ENCODE measurements at regions of chr14 and their contacts with region 1.

Region 1: DNA sequence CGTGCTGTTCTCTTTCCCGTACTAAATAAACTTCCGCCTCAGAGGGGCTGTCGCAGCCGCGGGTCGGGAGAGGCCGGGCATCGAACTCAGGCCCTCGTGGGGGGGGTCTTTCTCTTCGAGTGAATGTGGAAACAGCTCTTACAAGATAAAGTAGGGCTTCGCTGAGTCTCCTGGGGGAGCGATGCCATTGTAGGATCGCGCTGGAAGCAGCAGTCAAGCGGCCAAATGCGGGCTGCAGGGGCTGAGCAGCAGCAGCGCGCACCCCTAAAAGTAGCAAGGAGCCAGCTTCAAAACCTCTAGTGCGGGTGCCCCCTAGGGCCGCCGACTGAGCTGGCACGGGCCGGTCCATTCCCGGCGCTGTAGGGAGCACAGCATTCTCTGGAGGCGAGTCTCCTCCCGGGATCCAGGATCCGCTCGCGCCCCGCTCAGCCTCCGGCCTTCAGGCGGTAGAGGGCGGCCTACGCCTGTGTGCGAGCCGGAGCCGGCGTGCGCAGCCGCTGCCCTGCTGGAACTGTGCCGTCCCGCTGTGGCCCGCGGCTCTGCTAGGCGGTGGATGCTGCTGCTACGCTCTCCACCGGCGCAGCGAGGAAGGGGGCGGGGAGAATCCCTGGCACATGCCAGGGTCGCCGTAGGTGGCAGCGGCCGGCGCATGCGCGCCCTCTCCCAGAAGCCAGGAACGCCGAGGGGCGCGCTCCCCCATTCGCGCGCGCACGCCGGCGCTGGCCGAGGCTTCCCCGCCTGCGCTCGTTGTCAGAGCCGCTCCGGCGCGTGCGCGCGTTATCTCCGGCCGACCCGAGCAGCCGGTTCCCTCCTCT is at the start of gene FUT8:
- DNase-seq: peak; percentile 98
- H3K4me3 ChIP-seq: peak within 1 kb of the TSS; percentile 66 to 93 (median 84)
- H3K27ac ChIP-seq: peak within 1 kb of the TSS; percentile 92 to 96 (median 94)
- H3K4me1 ChIP-seq: peaks cover 0 to 21% (median 10%) of the 10 kb centered on the region in 4 donors
- H3K27me3 ChIP-seq: no peaks in the 10 kb centered on the region
- CTCF ChIP-seq: peak; percentile 38 to 56 (median 42)
- EP300 ChIP-seq: peak in 1 of 4 donors; percentile 8
- POLR2A ChIP-seq: peak in 1 of 2 donors; percentile 31
- total RNA-seq, gene FUT8: 22.0 to 53.9 (median 33.0) TPM

Region 2: DNA sequence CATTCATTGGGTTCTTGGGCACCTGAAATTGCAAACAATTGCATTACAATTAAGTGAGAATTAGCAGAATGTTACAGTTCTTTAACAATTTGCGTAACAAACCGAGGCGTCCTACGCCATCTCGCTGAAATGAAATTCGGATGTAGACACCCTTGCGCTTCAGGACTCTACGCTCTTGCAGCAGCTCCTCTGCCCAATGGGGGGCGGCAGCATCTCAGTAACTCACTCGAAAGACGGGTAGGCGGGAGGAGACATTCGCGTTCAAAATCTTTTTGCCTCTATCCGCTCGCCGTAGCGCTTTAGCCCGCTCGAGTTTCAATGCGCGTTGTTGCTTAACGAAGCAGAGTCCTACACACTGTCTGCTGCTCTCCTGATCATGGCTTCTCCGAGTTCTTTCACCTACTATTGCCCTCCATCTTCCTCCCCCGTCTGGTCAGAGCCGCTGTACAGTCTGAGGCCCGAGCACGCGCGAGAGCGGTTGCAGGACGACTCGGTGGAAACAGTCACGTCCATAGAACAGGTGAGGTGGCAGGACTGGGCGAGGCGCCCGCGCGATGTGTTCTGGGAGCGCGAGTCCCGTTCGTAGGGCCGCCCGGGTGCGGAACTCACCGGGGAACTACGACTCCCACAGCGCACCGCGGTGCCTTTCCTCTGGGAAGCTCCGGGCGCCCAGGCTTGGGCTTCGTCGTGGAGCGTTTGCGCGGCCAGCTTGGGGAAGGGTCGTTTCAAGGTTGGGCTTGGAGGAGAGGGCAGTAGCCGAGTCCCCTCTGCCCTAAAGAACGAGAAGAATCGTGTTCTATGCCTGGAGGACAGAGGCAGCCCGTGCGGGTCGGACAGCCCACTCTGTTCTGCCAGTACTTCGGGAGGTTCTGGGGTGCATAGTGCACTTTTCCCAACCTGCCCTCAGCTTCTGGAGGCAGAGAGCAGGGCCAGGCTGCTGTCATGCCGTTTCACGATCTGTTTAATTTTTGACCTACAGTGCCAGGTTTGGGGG is 425.4 kb before region 1 on chr14 and contains the start of gene FNTB:
- intact Hi-C with region 1: loop called (anchors 2 kb)
- DNase-seq: peak; percentile 97
- H3K4me3 ChIP-seq: peak within 1 kb of the TSS; percentile 63 to 84 (median 67)
- H3K27ac ChIP-seq: peak within 1 kb of the TSS; percentile 82 to 90 (median 88)
- H3K4me1 ChIP-seq: peaks cover 0 to 22% (median 15%) of the 10 kb centered on the region in 4 donors
- H3K27me3 ChIP-seq: no peaks in the 10 kb centered on the region
- CTCF ChIP-seq: peak; percentile 55 to 80 (median 66)
- EP300 ChIP-seq: no peak
- POLR2A ChIP-seq: no peak
- total RNA-seq, gene FNTB: 10.7 to 13.0 (median 11.9) TPM

Region 3: GRCh38 chr14:65164068-65164824 is 248.0 kb before region 1 on chr14:
- intact Hi-C with region 1: loop called (anchors 2 kb)
- DNase-seq: no peak
- H3K4me3 ChIP-seq: no peak overlapping the region
- H3K27ac ChIP-seq: no peak overlapping the region
- H3K4me1 ChIP-seq: no peaks in the 10 kb centered on the region
- H3K27me3 ChIP-seq: no peaks in the 10 kb centered on the region
- CTCF ChIP-seq: peak; percentile 23 to 62 (median 38)
- EP300 ChIP-seq: no peak
- POLR2A ChIP-seq: no peak

Region 4: GRCh38 chr14:65263177-65263788 is 149.0 kb before region 1 on chr14:
- intact Hi-C with region 1: no loop called
- DNase-seq: no peak
- H3K4me3 ChIP-seq: no peak overlapping the region
- H3K27ac ChIP-seq: no peak overlapping the region
- H3K4me1 ChIP-seq: no peaks in the 10 kb centered on the region
- H3K27me3 ChIP-seq: peaks cover 0 to 1% (median 0%) of the 10 kb centered on the region in 3 donors
- CTCF ChIP-seq: no peak
- EP300 ChIP-seq: no peak
- POLR2A ChIP-seq: no peak

Region 5: DNA sequence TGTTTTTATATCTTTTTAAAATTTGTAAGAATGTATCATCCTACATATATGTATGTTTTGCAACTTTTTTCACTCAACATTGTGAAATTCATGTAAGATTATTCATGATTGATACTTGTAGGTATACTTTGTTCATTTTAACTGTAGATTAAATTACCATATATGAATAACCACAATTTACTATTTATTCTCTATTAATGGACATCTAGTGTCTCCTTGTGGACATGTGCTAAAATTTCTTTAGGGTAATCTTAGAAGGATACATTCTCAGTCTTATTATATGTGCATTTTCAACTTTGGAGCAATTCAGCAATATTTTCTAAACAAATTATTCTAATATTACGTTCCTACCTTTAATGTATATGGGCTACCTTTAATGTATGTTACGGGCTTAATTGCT is 192.7 kb after region 1 on chr14:
- intact Hi-C with region 1: loop called (anchors 5 kb)
- DNase-seq: no peak
- H3K4me3 ChIP-seq: no peak overlapping the region
- H3K27ac ChIP-seq: no peak overlapping the region
- H3K4me1 ChIP-seq: no peaks in the 10 kb centered on the region
- H3K27me3 ChIP-seq: no peaks in the 10 kb centered on the region
- CTCF ChIP-seq: no peak
- EP300 ChIP-seq: no peak
- POLR2A ChIP-seq: no peak

Region 6: GRCh38 chr14:65958664-65959562 is 546.7 kb after region 1 on chr14:
- intact Hi-C with region 1: loop called (anchors 5 kb)
- DNase-seq: no peak
- H3K4me3 ChIP-seq: no peak overlapping the region
- H3K27ac ChIP-seq: no peak overlapping the region
- H3K4me1 ChIP-seq: no peaks in the 10 kb centered on the region
- H3K27me3 ChIP-seq: peaks cover 0 to 7% (median 0%) of the 10 kb centered on the region in 3 donors
- CTCF ChIP-seq: peak in 2 of 4 experiments; percentile 30 to 44
- EP300 ChIP-seq: no peak
- POLR2A ChIP-seq: no peak